ENCODE measurements at regions of chr3 and their contacts with region 1.

Region 1: GRCh38 chr3:25107918-25108629 is 320.0 kb upstream of the RARB start:
- DNase-seq: no peak
- ATAC-seq: no peak
- H3K4me3 ChIP-seq: no peak overlapping the region
- H3K27ac ChIP-seq: no peak overlapping the region
- H3K4me1 ChIP-seq: no peaks in the 10 kb centered on the region
- H3K27me3 ChIP-seq: no peaks in the 10 kb centered on the region
- CTCF ChIP-seq: no peak

Region 2: GRCh38 chr3:24945563-24945962 is 162.5 kb before region 1 on chr3:
- CTCF ChIA-PET with region 1: no interaction called
- POLR2A ChIA-PET with region 1: no interaction called
- in situ Hi-C with region 1: no loop called
- intact Hi-C with region 1: no loop called
- DNase-seq: no peak
- ATAC-seq: no peak
- H3K4me3 ChIP-seq: no peak overlapping the region
- H3K27ac ChIP-seq: no peak overlapping the region
- H3K4me1 ChIP-seq: no peaks in the 10 kb centered on the region
- H3K27me3 ChIP-seq: no peaks in the 10 kb centered on the region
- CTCF ChIP-seq: no peak

Region 3: DNA sequence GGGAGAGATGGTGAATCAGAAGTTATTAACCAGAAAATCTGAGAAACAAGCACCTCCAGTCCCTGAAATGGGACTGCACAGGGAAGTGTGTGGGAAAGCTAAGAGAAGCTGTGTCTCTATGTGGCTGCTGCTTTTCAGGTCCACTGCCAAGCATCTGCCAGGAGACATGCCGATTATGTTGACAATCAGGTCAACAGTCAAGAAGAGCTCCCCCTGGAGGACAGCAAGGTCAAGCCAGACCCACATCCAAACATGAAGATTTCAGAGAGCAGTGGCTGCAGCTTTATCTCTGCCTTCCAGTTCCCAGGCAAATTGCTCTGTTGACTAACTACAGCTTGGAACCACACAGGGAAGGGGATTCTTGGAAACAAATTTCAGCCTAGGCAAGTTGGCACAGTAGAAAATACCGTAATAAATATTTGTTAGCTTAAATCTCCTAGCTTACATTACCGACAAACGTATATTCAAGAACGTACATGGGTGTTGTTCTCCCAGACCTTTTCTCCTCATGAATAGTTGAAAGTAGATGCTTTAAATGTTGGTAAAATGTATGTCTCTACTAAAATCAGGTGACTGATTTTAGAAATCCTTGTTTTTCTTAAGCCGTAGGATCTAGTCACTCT is 74.6 kb before region 1 on chr3:
- CTCF ChIA-PET with region 1: interaction called, 10 read pairs
- POLR2A ChIA-PET with region 1: no interaction called
- in situ Hi-C with region 1: no loop called
- intact Hi-C with region 1: no loop called
- DNase-seq: peak; percentile 20
- ATAC-seq: no peak
- H3K4me3 ChIP-seq: no peak overlapping the region
- H3K27ac ChIP-seq: no peak overlapping the region
- H3K4me1 ChIP-seq: no peaks in the 10 kb centered on the region
- H3K27me3 ChIP-seq: no peaks in the 10 kb centered on the region
- CTCF ChIP-seq: peak; percentile 50